ENCODE measurements at regions of chr5 and their contacts with region 1.

Region 1: DNA sequence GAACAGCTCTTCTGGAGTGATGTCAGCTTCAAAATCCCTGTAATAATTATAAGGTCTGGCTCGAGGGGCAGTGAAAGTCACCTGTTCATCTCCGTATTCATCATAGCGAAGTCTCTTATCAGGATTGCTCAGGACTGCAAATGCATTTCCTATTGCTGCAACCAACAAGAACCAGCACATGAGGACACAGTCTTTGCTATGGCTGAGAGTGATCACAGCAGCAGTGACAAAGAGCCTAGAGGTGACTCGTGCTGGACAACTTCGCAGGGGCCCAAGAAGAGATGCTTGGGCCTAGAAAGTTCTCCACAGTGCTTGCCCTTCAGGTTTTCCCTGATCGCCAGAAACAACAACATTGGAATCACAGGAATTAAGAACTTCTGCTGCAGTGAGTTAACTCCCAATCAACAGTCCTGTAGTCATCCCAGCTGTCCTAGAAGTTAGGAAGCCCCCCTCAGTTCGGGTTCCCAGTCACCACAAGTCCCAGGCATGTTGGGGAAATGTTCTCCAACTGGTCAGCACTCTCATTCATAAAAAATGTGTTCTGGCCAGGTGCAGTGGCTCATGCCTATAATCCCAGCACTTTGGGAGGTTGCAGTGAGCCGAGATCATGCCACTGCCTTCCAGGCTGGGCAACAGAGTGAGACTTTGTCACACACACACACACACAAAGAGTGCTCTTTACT is 13.0 kb downstream of the DNAJC18 start:
- DNase-seq: peak in 1 of 5 donors; percentile 31
- H3K4me3 ChIP-seq: no peak overlapping the region
- H3K27ac ChIP-seq: no peak overlapping the region
- H3K4me1 ChIP-seq: no peaks in the 10 kb centered on the region
- H3K27me3 ChIP-seq: no peaks in the 10 kb centered on the region
- CTCF ChIP-seq: no peak

Region 2: GRCh38 chr5:139513852-139514485 is 87.6 kb after region 1 on chr5:
- intact Hi-C with region 1: loop called (anchors 5 kb)
- DNase-seq: no peak
- H3K4me3 ChIP-seq: no peak overlapping the region
- H3K27ac ChIP-seq: no peak overlapping the region
- H3K4me1 ChIP-seq: peaks cover 0 to 6% (median 0%) of the 10 kb centered on the region in 3 donors
- H3K27me3 ChIP-seq: no peaks in the 10 kb centered on the region
- CTCF ChIP-seq: no peak

Measured in kidney (tissue), 22 donors.